Sigmoid colon (tissue), 7 donors: ENCODE measurements at regions of chr1 and their contacts with region 1.

Region 1: GRCh38 chr1:153572569-153573015 is 6.9 kb upstream of the S100A2 start:
- DNase-seq: peak; percentile 91
- H3K4me3 ChIP-seq: no peak overlapping the region
- H3K27ac ChIP-seq: peak overlapping the region; percentile 57 to 68 (median 62)
- H3K4me1 ChIP-seq: peaks cover 0 to 28% (median 22%) of the 10 kb centered on the region in 4 donors
- H3K27me3 ChIP-seq: no peaks in the 10 kb centered on the region
- CTCF ChIP-seq: peak; percentile 64 to 89 (median 84)
- EP300 ChIP-seq: no peak
- POLR2A ChIP-seq: no peak

Region 2: DNA sequence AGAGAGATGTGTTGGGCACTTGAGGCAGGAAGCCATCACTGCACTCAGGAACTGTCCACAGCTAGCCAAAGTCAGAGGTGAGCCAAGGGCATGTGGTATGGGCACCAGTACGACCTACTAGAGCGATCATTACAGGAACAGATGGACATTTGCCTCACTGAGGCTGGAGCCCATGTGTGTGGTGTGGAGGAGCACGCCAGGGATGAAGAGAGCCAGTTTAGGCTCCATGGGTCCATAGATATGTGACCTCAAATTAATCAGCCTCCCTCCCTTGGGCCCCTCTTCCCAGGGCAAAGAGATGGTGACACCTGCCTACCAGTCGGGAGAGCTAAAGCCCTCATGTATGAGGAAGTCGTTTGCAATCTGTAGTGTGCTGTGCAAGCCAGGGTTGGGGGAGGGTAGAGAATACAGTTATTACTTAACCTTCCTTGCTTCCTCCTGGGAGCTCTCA is 228.0 kb before region 1 on chr1:
- intact Hi-C with region 1: no loop called
- DNase-seq: no peak
- H3K4me3 ChIP-seq: no peak overlapping the region
- H3K27ac ChIP-seq: no peak overlapping the region
- H3K4me1 ChIP-seq: no peaks in the 10 kb centered on the region
- H3K27me3 ChIP-seq: peaks cover 0 to 13% (median 0%) of the 10 kb centered on the region in 3 donors
- CTCF ChIP-seq: no peak
- EP300 ChIP-seq: no peak
- POLR2A ChIP-seq: no peak

Region 3: DNA sequence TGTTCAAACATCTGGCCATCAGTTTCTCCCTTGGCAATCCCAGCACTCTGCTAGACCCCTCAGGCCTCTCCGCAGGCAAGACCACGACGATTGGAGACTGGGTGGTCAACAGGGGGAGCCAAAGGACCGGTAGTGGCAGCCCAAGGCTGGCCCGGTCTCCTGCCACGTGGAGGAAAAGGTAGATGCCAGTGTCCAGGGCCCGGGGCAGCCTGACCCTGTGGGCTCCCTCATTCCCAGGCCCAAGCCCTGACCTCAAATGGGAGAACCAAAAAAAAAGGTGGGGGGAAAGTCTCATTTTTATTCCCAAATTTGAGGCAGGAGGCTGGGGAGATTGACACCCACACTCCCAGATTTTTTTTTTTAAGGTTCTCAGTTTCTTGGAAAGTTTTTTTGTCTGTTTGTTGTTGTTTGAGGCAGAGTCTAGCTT is 61.6 kb before region 1 on chr1:
- intact Hi-C with region 1: loop called (anchors 1 kb)
- DNase-seq: peak; percentile 88
- H3K4me3 ChIP-seq: no peak overlapping the region
- H3K27ac ChIP-seq: peak overlapping the region in 2 of 4 donors; percentile 4 to 38
- H3K4me1 ChIP-seq: peaks cover 0 to 31% (median 25%) of the 10 kb centered on the region in 4 donors
- H3K27me3 ChIP-seq: no peaks in the 10 kb centered on the region
- CTCF ChIP-seq: peak; percentile 80 to 91 (median 88)
- EP300 ChIP-seq: no peak
- POLR2A ChIP-seq: no peak

Region 4: GRCh38 chr1:153617675-153618074 is 45.1 kb after region 1 on chr1:
- intact Hi-C with region 1: loop called (anchors 2 kb)
- DNase-seq: peak; percentile 90
- H3K4me3 ChIP-seq: no peak overlapping the region
- H3K27ac ChIP-seq: peak overlapping the region in 3 of 4 donors; percentile 5 to 10 (median 7)
- H3K4me1 ChIP-seq: peaks cover 0 to 29% (median 17%) of the 10 kb centered on the region in 4 donors
- H3K27me3 ChIP-seq: no peaks in the 10 kb centered on the region
- CTCF ChIP-seq: peak in 2 of 4 experiments; percentile 31 to 39
- EP300 ChIP-seq: no peak
- POLR2A ChIP-seq: no peak

Region 5: GRCh38 chr1:153727463-153728304 is 155.1 kb after region 1 on chr1 and contains the start of gene INTS3:
- intact Hi-C with region 1: loop called (anchors 5 kb)
- DNase-seq: peak; percentile 100
- H3K4me3 ChIP-seq: peak within 1 kb of the TSS; percentile 70 to 93 (median 86)
- H3K27ac ChIP-seq: peak within 1 kb of the TSS; percentile 94 to 100 (median 98)
- H3K4me1 ChIP-seq: peaks cover 0 to 28% (median 21%) of the 10 kb centered on the region in 4 donors
- H3K27me3 ChIP-seq: no peaks in the 10 kb centered on the region
- CTCF ChIP-seq: no peak
- EP300 ChIP-seq: no peak
- POLR2A ChIP-seq: peak; percentile 63 to 66
- total RNA-seq, gene INTS3: 31.4 to 53.7 (median 37.3) TPM

Region 6: DNA sequence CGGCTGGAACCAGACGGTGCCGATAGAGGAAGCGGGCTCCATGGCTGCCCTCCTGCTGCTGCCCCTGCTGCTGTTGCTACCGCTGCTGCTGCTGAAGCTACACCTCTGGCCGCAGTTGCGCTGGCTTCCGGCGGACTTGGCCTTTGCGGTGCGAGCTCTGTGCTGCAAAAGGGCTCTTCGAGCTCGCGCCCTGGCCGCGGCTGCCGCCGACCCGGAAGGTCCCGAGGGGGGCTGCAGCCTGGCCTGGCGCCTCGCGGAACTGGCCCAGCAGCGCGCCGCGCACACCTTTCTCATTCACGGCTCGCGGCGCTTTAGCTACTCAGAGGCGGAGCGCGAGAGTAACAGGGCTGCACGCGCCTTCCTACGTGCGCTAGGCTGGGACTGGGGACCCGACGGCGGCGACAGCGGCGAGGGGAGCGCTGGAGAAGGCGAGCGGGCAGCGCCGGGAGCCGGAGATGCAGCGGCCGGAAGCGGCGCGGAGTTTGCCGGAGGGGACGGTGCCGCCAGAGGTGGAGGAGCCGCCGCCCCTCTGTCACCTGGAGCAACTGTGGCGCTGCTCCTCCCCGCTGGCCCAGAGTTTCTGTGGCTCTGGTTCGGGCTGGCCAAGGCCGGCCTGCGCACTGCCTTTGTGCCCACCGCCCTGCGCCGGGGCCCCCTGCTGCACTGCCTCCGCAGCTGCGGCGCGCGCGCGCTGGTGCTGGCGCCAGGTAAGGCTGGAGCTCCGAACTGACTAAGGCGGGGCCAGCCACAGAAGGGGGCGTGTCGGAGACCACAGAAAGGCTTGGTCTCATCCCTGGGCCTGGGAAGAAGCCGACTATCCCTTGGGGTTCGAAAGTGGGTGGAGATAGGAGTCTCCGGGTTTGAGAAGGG is 203.1 kb after region 1 on chr1:
- intact Hi-C with region 1: loop called (anchors 1 kb)
- DNase-seq: peak; percentile 90
- H3K4me3 ChIP-seq: peak overlapping the region; percentile 60 to 89 (median 71)
- H3K27ac ChIP-seq: peak overlapping the region; percentile 88 to 93 (median 92)
- H3K4me1 ChIP-seq: peaks cover 0 to 52% (median 41%) of the 10 kb centered on the region in 4 donors
- H3K27me3 ChIP-seq: no peaks in the 10 kb centered on the region
- CTCF ChIP-seq: no peak
- EP300 ChIP-seq: no peak
- POLR2A ChIP-seq: peak; percentile 17 to 24